PC-3 (cell line): ENCODE measurements at regions of chr1 and their contacts with region 1.

Region 1: DNA sequence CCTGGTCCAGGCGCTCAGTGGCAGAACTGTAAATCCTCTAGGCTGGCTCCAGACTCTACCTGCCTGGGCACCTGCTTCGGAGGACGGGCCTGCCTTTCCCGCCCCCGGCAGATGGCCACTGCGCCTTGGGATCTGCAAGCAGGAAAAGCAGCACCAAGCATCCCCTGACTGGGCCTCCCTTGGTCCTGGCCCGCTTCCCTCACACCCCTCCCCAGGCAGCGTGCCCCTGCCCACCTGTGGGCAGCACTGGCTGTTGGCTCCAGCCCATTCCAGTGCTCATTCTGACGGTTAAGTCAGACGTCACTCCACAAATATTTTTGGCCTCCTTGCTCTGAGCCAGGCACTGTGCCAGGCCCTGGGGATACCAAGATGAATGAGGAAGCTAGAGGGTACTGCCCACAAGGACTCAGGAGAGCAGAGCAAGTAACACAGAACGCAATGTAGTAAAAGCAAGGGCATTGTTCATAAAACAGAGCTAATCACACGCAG is 22.0 kb upstream of the BLACAT1 start:
- DNase-seq: peak; percentile 99
- ATAC-seq: peak; percentile 92
- H3K4me3 ChIP-seq: no peak overlapping the region
- H3K27ac ChIP-seq: peak overlapping the region; percentile 52
- H3K4me1 ChIP-seq: peaks cover 18% of the 10 kb centered on the region
- H3K27me3 ChIP-seq: peaks cover 1% of the 10 kb centered on the region; the same call in 1 of the 2 replicates
- CTCF ChIP-seq: 0 out of 2 replicates have a peak, but pooled peaks have one; percentile 25

Region 2: DNA sequence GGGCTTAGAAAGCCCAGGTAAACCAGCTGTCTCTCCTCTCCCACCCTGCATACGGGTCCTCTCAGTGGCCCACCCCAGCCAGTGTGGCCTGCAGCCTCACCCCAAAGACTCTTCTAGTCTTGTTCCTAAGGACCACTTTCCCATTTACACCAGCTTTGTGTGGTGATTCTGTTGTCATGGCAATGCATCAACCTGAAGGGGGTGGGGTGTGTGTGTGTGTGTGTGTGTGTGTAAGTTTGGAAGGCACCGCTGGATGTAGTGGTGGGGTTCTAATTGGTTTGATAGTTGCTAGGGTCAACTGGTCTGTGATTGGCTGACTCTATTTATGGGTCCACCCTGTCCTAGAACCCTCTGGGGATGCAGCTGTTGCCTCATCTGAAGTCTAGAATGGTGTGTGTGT is 22.0 kb after region 1 on chr1:
- CTCF ChIA-PET with region 1: no interaction called
- POLR2A ChIA-PET with region 1: interaction called, 12 read pairs
- intact Hi-C with region 1: no loop called
- DNase-seq: no peak
- ATAC-seq: no peak
- H3K4me3 ChIP-seq: no peak overlapping the region
- H3K27ac ChIP-seq: no peak overlapping the region
- H3K4me1 ChIP-seq: peaks cover 5% of the 10 kb centered on the region; the same call in 1 of the 2 replicates
- H3K27me3 ChIP-seq: no peaks in the 10 kb centered on the region
- CTCF ChIP-seq: no peak